MCF 10A (cell line): ENCODE measurements at regions of chr1 and their contacts with region 1.

Region 1: GRCh38 chr1:204072931-204073836 is at the start of gene SOX13:
- DNase-seq: peak; percentile 98
- H3K4me3 Mint-ChIP-seq: peak within 1 kb of the TSS; percentile 75
- H3K27ac Mint-ChIP-seq: peak within 1 kb of the TSS; percentile 55
- H3K4me1 Mint-ChIP-seq: peaks cover 20% of the 10 kb centered on the region
- H3K27me3 Mint-ChIP-seq: no peaks in the 10 kb centered on the region
- CTCF ChIP-seq: peak; percentile 34
- total RNA-seq, gene SOX13: 23.7 and 32.8 TPM in 2 replicates

Region 2: GRCh38 chr1:203839059-203839458 is 234.1 kb before region 1 on chr1:
- CTCF ChIA-PET with region 1: no interaction called
- POLR2A ChIA-PET with region 1: no interaction called
- intact Hi-C with region 1: no loop called
- DNase-seq: peak; percentile 34
- H3K4me3 Mint-ChIP-seq: no peak overlapping the region
- H3K27ac Mint-ChIP-seq: peak overlapping the region; percentile 5
- H3K4me1 Mint-ChIP-seq: no peaks in the 10 kb centered on the region
- H3K27me3 Mint-ChIP-seq: no peaks in the 10 kb centered on the region
- CTCF ChIP-seq: no peak

Region 3: GRCh38 chr1:203888807-203889251 is 184.4 kb before region 1 on chr1:
- CTCF ChIA-PET with region 1: interaction called, 4 read pairs
- POLR2A ChIA-PET with region 1: interaction called, 9 read pairs
- intact Hi-C with region 1: loop called (anchors 1 kb)
- DNase-seq: peak; percentile 77
- H3K4me3 Mint-ChIP-seq: peak overlapping the region; percentile 11
- H3K27ac Mint-ChIP-seq: peak overlapping the region; percentile 98
- H3K4me1 Mint-ChIP-seq: peaks cover 27% of the 10 kb centered on the region
- H3K27me3 Mint-ChIP-seq: no peaks in the 10 kb centered on the region
- CTCF ChIP-seq: no peak

Region 4: GRCh38 chr1:203906932-203907331 is 166.3 kb before region 1 on chr1:
- CTCF ChIA-PET with region 1: interaction called, 3 read pairs
- POLR2A ChIA-PET with region 1: interaction called, 14 read pairs
- intact Hi-C with region 1: loop called (anchors 1 kb)
- DNase-seq: peak; percentile 99
- H3K4me3 Mint-ChIP-seq: no peak overlapping the region
- H3K27ac Mint-ChIP-seq: peak overlapping the region; percentile 60
- H3K4me1 Mint-ChIP-seq: peaks cover 19% of the 10 kb centered on the region
- H3K27me3 Mint-ChIP-seq: no peaks in the 10 kb centered on the region
- CTCF ChIP-seq: no peak

Region 5: DNA sequence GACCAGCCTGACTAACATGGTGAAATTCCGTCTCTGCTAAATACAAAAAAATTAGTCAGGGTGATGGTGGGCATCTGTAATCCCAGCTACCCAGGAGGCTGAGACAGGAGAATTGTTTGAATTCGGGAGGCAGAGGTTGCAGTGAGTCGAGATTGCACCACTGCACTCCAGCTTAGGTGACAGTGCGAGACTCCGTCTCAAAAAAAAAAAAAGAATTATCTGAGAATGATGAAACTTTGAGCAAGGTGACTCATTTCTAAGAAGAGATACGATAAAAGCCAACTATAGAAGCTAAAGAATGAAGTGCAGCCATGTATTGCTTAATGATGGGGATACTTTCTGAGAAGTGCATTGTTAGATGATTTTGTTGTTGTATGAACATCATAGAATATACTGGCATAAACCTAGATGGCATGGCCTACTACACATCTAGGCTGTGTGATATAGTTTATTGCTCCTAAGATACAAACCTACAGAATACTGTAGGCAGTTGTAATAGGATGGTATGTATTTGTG is 147.1 kb before region 1 on chr1:
- CTCF ChIA-PET with region 1: no interaction called
- POLR2A ChIA-PET with region 1: interaction called, 4 read pairs
- intact Hi-C with region 1: loop called (anchors 1 kb)
- DNase-seq: peak; percentile 85
- H3K4me3 Mint-ChIP-seq: no peak overlapping the region
- H3K27ac Mint-ChIP-seq: peak overlapping the region; percentile 57
- H3K4me1 Mint-ChIP-seq: peaks cover 21% of the 10 kb centered on the region
- H3K27me3 Mint-ChIP-seq: no peaks in the 10 kb centered on the region
- CTCF ChIP-seq: no peak

Region 6: DNA sequence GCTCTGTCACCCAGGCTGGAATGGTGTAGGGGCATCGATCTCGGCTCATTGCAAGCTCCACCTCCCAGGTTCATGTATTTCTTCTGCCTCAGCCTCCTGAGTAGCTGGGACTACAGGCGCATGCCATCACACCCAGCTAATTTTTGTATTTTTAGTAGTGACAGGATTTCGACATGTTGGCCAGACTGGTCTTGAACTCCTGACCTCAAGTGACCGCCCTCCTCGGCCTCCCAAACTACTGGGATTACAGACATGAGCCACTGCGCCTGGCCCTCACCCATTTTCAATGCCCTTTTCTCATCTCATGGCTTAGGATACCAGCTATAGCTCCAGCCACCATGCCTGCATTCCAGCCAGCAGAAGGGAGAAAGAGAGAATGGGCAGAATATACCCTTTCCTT is 13.2 kb before region 1 on chr1:
- CTCF ChIA-PET with region 1: interaction called, 5 read pairs
- POLR2A ChIA-PET with region 1: interaction called, 36 read pairs
- intact Hi-C with region 1: no loop called
- DNase-seq: no peak
- H3K4me3 Mint-ChIP-seq: no peak overlapping the region
- H3K27ac Mint-ChIP-seq: no peak overlapping the region
- H3K4me1 Mint-ChIP-seq: peaks cover 21% of the 10 kb centered on the region
- H3K27me3 Mint-ChIP-seq: no peaks in the 10 kb centered on the region
- CTCF ChIP-seq: no peak

Region 7: DNA sequence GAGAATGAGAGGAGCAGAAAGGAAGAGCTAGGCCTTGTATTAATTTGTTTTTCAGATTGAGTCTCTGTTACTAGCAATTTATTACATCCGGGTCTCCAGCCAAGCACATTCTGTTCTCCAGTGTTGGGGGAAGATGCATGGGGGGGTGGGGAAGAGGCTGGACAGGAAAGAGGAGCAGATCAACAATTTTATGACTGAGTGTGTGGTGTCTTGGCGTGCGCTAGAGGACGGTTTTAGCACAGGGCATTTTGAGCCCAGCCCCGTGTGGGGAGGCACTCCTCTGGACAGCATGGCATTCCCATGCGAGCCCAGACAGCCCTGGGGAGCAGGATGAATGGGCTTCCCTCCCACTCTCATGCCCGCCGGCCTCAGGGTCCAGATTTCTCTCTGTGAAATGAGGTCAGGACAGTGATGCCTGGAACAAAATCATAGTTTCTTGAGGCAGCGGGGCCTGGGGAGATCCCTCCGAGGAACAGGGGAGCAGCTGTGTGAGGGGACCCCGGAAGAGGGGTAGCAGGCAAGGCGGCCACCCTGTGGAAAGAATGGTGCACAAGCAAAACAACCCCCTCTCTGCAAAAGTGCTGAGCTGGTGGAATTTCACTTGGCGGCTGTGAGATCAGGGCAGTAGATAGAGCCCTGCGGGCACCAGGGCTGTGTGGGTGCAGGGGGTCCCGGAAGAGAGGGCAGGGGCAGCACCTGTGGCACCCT is 16.0 kb after region 1 on chr1:
- CTCF ChIA-PET with region 1: interaction called, 3 read pairs
- POLR2A ChIA-PET with region 1: interaction called, 16 read pairs
- intact Hi-C with region 1: no loop called
- DNase-seq: peak; percentile 36
- H3K4me3 Mint-ChIP-seq: no peak overlapping the region
- H3K27ac Mint-ChIP-seq: peak overlapping the region; percentile 81
- H3K4me1 Mint-ChIP-seq: peaks cover 43% of the 10 kb centered on the region
- H3K27me3 Mint-ChIP-seq: no peaks in the 10 kb centered on the region
- CTCF ChIP-seq: no peak

Region 8: GRCh38 chr1:204257954-204258752 is 185.0 kb after region 1 on chr1:
- CTCF ChIA-PET with region 1: no interaction called
- POLR2A ChIA-PET with region 1: no interaction called
- intact Hi-C with region 1: no loop called
- DNase-seq: peak; percentile 80
- H3K4me3 Mint-ChIP-seq: no peak overlapping the region
- H3K27ac Mint-ChIP-seq: peak overlapping the region; percentile 49
- H3K4me1 Mint-ChIP-seq: peaks cover 13% of the 10 kb centered on the region
- H3K27me3 Mint-ChIP-seq: no peaks in the 10 kb centered on the region
- CTCF ChIP-seq: peak; percentile 97